ENCODE measurements at regions of chr1 and their contacts with region 1.

Region 1: DNA sequence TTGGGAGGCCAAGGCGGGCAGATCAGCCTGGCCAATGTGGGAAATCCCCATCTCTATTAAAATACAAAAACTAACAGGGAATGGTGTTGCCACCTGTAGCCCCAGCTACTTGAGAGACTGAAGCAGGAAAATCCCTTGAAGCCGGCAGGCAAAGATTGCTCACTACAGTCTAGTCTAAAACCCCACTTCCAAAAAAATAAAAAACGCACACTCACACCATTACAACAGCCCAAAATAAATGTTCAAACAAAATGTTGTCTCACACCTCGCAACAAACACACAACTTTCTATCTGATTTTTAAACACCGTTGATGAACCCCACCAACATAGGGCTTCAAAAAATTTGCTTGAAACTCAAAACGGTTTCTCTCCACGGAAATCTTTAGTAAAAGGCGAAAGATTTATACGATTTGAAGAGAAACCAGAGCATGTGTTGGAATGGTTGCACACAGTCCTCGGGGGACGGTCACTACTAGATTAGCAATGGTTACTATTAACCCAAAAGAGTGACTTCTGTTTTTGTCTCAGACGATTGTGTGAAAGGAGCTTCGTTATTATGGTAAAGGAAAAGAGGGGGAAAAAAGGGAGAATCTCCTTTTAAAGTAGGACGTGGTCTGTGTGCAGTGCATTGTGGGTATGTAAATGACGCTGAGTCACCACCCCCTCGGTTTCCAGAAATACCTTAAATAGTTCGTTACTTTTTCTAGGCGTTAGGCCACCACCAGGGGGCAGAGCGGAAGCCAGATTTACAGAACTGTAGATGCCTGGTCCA is at the start of gene RNU5D-1:
- DNase-seq: peak; percentile 97
- H3K4me3 ChIP-seq: no peak within 1 kb of the TSS
- H3K27ac ChIP-seq: peak within 1 kb of the TSS; percentile 89
- H3K4me1 ChIP-seq: peaks cover 2% of the 10 kb centered on the region
- H3K27me3 ChIP-seq: no peaks in the 10 kb centered on the region
- CTCF ChIP-seq: peak; percentile 77 to 84
- POLR2A ChIP-seq: peak; percentile 100
- total RNA-seq, gene RNU5D-1: not detected in 2 replicates

Region 2: DNA sequence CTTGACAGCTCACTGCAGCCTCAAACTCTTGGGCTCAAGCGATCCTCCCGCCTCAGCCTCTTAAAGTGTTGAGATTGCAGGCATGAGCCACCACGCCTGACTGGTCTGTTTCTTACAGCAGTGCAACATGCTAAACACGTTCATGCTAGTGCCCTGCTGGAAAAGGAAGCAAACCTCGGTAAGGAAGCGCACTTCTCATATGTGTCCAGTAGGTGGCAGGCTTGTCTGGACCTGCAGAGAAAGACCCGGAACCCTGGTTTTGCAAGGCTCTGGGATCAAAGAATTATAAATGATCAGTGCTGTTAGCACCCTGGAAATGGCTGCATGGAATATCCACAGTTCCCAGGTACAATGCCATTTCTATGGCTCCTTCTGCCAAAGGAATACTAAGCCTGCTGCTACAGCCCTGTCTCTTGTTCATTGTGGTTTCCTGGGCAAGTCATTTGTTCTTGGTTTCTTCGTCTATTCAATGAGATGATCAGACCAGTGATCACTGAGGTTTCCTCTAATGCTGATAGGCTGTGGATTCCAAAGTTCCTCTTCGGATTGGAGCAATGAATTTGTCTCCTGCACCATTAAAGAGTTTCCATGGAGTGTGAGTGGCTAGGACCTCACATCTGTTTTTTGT is 15.9 kb before region 1 on chr1:
- CTCF ChIA-PET with region 1: interaction called, 6 read pairs
- POLR2A ChIA-PET with region 1: interaction called, 7 read pairs
- dilution Hi-C with region 1: no loop called
- intact Hi-C with region 1: loop called (anchors 2 kb)
- DNase-seq: peak; percentile 73
- H3K4me3 ChIP-seq: no peak overlapping the region
- H3K27ac ChIP-seq: no peak overlapping the region
- H3K4me1 ChIP-seq: no peaks in the 10 kb centered on the region
- H3K27me3 ChIP-seq: peaks cover 4 to 7% of the 10 kb centered on the region in 2 experiments
- CTCF ChIP-seq: peak; percentile 86 to 92
- POLR2A ChIP-seq: no peak

Region 3: GRCh38 chr1:44760876-44761275 is 29.9 kb after region 1 on chr1:
- CTCF ChIA-PET with region 1: interaction called, 12 read pairs
- POLR2A ChIA-PET with region 1: no interaction called
- dilution Hi-C with region 1: no loop called
- intact Hi-C with region 1: no loop called
- DNase-seq: no peak
- H3K4me3 ChIP-seq: no peak overlapping the region
- H3K27ac ChIP-seq: no peak overlapping the region
- H3K4me1 ChIP-seq: peaks cover 12% of the 10 kb centered on the region
- H3K27me3 ChIP-seq: no peaks in the 10 kb centered on the region
- CTCF ChIP-seq: no peak
- POLR2A ChIP-seq: no peak

Region 4: GRCh38 chr1:44807262-44808062 is 76.5 kb after region 1 on chr1 and contains the start of gene DYNLT4:
- CTCF ChIA-PET with region 1: interaction called, 7 read pairs
- POLR2A ChIA-PET with region 1: interaction called, 3 read pairs
- dilution Hi-C with region 1: no loop called
- intact Hi-C with region 1: loop called (anchors 2 kb)
- DNase-seq: peak; percentile 100
- H3K4me3 ChIP-seq: peak within 1 kb of the TSS in 2 of 3 experiments; percentile 6 to 25
- H3K27ac ChIP-seq: peak within 1 kb of the TSS; percentile 100
- H3K4me1 ChIP-seq: peaks cover 72% of the 10 kb centered on the region
- H3K27me3 ChIP-seq: no peaks in the 10 kb centered on the region
- CTCF ChIP-seq: no peak
- POLR2A ChIP-seq: peak; percentile 75
- total RNA-seq, gene DYNLT4: 0.62 and 1.1 TPM in 2 replicates

Measured in endothelial cell of umbilical vein (primary cell).